Heart left ventricle (tissue), 16 donors: ENCODE measurements at regions of chr20 and their contacts with region 1.

Region 1: DNA sequence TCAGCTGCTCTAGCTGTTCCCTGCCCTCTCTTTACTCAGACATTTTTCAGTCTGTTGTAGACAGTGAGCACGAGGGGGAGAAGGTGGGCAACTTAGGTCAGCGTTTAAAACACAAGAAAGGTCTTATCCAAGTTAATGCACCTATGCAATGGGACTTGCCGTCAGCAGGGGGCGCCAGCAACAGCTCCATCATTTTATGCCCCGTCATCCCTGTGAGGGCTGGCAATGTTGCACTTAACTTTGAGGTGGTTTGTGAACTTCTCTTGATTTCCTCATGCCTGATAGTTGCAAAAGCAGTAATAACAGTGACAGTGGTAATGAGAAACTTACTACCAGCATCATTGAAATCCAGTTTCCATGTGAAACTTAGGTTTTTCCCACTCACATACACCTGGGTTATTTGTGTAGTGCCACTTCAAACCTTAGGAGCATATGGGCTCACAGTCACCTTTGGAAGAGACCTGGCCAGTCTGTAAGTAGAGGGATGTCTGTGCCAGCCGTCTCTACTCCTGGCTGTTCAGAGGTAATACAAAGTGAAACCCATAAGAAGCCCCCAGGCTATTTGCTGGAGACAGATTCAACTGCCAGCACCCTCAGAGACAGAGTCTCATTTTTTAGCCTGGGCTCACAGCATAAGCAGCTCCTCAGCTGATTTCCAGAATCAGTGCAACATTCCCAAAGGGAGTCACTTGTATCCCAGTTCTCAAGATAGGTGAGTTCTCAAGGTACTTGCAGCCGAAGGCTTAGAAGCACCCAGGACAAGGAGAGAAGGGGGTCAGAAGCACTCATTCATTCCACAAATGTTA is 44.8 kb upstream of the ID1 start:
- DNase-seq: peak; percentile 54 to 85 (median 60)
- ATAC-seq: peak; percentile 5 to 31 (median 11)
- H3K4me3 ChIP-seq: no peak overlapping the region
- H3K27ac ChIP-seq: peak overlapping the region in 4 of 12 donors; percentile 9 to 37 (median 20)
- H3K4me1 ChIP-seq: peaks cover 0 to 19% (median 5%) of the 10 kb centered on the region in 12 donors
- H3K27me3 ChIP-seq: no peaks in the 10 kb centered on the region
- CTCF ChIP-seq: peak; percentile 63 to 91 (median 83)
- POLR2A ChIP-seq: no peak

Region 2: DNA sequence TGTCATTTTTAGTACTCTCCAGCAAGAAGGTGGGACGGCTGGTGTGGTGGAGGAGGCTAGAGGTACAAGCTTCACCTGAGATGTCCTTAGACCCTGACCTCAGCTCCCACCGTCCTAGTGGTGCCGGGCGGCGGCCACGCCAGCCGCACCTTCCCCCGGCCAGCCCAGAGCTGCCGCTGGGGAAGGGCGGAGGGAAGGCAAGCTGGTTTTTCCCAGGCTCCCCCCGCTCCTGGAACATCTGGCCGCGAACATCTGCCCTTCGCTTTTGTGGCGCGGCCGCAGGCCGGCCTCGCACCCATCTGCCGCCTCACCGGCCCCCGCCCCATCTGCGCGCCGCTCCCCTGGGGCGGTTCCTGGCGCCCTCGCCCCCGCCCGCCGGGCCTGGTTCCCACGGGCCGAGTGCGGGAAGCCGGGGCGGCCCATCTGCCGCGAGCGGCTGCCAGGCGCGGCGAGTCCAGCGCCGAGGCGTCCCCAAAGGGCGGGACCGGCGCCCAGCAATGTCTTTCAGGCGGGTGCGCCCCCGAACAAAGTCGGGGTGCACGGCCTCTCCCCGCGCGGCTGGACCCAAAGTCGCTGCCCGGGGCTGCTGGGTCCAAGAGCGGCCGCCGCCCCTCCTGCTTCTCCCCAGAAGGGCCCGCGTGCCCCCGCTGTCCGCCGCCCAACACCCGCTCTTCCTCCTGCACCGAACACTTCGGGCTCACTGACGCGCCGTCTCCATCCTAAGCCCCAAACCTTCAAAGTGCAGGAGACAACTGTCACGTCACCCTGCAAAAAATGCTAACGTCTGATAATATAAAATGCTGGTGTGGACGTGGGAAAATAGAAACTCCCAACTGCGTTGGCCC is 27.5 kb after region 1 on chr20:
- intact Hi-C with region 1: no loop called
- DNase-seq: peak; percentile 82 to 87 (median 84)
- ATAC-seq: peak; percentile 58 to 94 (median 90)
- H3K4me3 ChIP-seq: peak overlapping the region; percentile 16 to 60 (median 50)
- H3K27ac ChIP-seq: peak overlapping the region; percentile 79 to 99 (median 90)
- H3K4me1 ChIP-seq: peaks cover 0 to 36% (median 15%) of the 10 kb centered on the region in 12 donors
- H3K27me3 ChIP-seq: peaks cover 0 to 9% (median 0%) of the 10 kb centered on the region in 9 donors
- CTCF ChIP-seq: no peak
- POLR2A ChIP-seq: no peak

Region 3: DNA sequence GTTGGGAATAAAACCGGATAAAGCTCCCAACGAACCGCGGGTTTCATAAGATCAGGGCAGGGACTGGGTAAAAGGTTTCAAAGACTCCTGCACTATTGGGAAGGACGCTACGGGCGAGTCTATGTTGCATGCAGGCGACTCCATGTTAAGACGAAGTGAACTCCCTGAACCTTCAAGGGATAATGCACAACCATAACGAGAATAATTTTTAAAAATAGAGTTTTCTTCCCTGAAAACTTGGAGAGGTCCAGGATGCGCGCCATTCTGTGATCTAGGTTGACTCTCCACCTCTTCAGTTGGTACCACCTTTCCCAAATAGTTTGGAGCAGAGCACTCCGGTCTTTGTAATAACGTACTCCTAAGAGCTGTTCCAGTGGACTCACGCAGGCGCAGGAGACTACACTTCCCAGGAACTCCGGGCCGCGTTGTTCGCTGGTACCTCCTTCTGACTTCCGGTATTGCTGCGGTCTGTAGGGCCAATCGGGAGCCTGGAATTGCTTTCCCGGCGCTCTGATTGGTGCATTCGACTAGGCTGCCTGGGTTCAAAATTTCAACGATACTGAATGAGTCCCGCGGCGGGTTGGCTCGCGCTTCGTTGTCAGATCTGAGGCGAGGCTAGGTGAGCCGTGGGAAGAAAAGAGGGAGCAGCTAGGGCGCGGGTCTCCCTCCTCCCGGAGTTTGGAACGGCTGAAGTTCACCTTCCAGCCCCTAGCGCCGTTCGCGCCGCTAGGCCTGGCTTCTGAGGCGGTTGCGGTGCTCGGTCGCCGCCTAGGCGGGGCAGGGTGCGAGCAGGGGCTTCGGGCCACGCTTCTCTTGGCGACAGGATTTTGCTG is 178.6 kb after region 1 on chr20 and contains the start of gene TPX2:
- intact Hi-C with region 1: loop called in 1 of 10 experiments (anchors 10 kb)
- DNase-seq: peak; percentile 95 to 97 (median 95)
- ATAC-seq: peak; percentile 100
- H3K4me3 ChIP-seq: peak within 1 kb of the TSS; percentile 57 to 85 (median 70)
- H3K27ac ChIP-seq: peak within 1 kb of the TSS; percentile 30 to 92 (median 82)
- H3K4me1 ChIP-seq: peaks cover 0 to 26% (median 4%) of the 10 kb centered on the region in 12 donors
- H3K27me3 ChIP-seq: no peaks in the 10 kb centered on the region
- CTCF ChIP-seq: peak in 3 of 12 donors; percentile 8 to 32 (median 11)
- POLR2A ChIP-seq: peak in 1 of 2 donors; percentile 79
- total RNA-seq, gene TPX2: 0.38 to 15.2 (median 0.77) TPM